ENCODE measurements at regions of chr1 and their contacts with region 1.

Region 1: GRCh38 chr1:68696221-68696620 is 199.3 kb upstream of the DEPDC1 start:
- DNase-seq: no peak
- H3K4me3 ChIP-seq: no peak overlapping the region
- H3K27ac ChIP-seq: no peak overlapping the region
- H3K4me1 ChIP-seq: no peaks in the 10 kb centered on the region
- H3K27me3 ChIP-seq: no peaks in the 10 kb centered on the region
- CTCF ChIP-seq: no peak
- EP300 ChIP-seq: no peak
- POLR2A ChIP-seq: no peak

Region 2: DNA sequence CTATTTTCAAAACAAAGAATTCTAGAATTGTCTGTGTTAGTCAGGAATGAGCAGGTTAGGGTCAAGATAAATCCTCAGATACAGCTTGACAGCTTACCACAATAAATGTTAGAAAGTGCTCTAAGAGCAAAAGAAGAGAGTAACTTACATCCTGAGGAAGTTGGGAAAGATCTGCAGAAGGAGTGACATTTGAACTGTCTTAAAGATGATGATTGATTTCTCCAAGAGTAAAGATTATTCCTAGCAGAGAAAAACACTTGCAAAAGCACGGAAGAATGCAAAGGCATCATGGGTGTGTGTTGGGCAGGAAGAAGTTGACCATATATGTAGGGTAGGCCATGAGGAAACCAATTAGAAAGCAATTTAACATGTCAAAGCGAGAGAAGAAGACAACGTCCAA is 1046.9 kb after region 1 on chr1:
- in situ Hi-C with region 1: no loop called
- intact Hi-C with region 1: loop called (anchors 5 kb)
- DNase-seq: no peak
- H3K4me3 ChIP-seq: no peak overlapping the region
- H3K27ac ChIP-seq: no peak overlapping the region
- H3K4me1 ChIP-seq: no peaks in the 10 kb centered on the region
- H3K27me3 ChIP-seq: no peaks in the 10 kb centered on the region
- CTCF ChIP-seq: no peak
- EP300 ChIP-seq: no peak
- POLR2A ChIP-seq: no peak

Measured in transverse colon (tissue), 4 donors.